Calu3 (cell line): ENCODE measurements at regions of chr1 and their contacts with region 1.

Region 1: GRCh38 chr1:61337981-61338848 is 255.9 kb downstream of the NFIA start:
- DNase-seq: peak; percentile 80
- H3K4me3 Mint-ChIP-seq: peak overlapping the region; percentile 51
- H3K27ac Mint-ChIP-seq: peak overlapping the region; percentile 68
- H3K4me1 Mint-ChIP-seq: peaks cover 35% of the 10 kb centered on the region
- H3K27me3 Mint-ChIP-seq: no peaks in the 10 kb centered on the region
- CTCF ChIP-seq: peak; percentile 80

Region 2: GRCh38 chr1:60978421-60979357 is 359.5 kb before region 1 on chr1:
- CTCF ChIA-PET with region 1: no interaction called
- intact Hi-C with region 1: loop called (anchors 5 kb)
- DNase-seq: peak; percentile 66
- H3K4me3 Mint-ChIP-seq: no peak overlapping the region
- H3K27ac Mint-ChIP-seq: no peak overlapping the region
- H3K4me1 Mint-ChIP-seq: no peaks in the 10 kb centered on the region
- H3K27me3 Mint-ChIP-seq: no peaks in the 10 kb centered on the region
- CTCF ChIP-seq: peak; percentile 57

Region 3: DNA sequence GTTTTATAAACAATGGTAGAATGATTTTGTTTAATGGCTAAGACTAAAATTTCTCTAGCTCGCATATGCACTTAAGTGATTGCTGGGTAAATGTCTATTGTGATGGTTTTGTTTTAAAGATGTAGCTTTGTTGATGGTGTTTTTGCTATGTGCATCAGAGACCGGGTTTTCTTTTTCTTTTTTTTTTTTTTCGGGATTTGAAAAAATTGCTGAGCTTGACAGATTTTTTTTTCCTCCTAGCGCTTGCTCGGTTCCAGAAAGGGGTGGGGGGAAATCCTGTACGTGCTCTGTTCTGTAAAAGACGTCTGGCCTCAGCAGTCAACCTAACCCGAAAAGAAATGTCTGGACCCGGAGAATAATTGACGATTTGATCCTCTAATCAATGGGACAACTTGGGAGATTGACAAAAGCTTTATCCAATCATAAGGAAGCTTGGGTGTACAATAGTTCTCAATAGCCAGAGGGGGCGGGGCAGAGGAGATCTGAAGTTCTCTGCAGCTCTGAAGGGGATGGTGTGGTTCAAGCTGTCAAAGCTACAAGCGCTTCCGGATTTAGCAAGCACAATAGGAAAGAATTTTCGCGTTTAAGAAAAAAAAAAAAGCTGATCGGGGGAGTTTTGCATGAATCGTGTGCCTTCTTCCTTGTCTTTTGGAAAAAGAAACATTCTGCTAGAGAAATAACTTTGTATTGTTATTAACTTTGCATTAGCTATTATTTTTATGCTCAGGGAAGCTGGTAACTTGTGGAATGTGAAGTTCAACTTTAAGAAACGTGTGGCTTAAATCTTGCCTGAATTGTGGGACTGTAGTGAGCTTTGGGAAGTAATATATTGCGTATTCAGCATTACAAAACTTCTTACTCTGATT is 260.3 kb before region 1 on chr1:
- CTCF ChIA-PET with region 1: interaction called, 4 read pairs
- intact Hi-C with region 1: loop called (anchors 5 kb)
- DNase-seq: peak; percentile 95
- H3K4me3 Mint-ChIP-seq: peak overlapping the region; percentile 96
- H3K27ac Mint-ChIP-seq: peak overlapping the region; percentile 93
- H3K4me1 Mint-ChIP-seq: peaks cover 53% of the 10 kb centered on the region
- H3K27me3 Mint-ChIP-seq: no peaks in the 10 kb centered on the region
- CTCF ChIP-seq: no peak

Region 4: GRCh38 chr1:61226784-61227567 is 111.2 kb before region 1 on chr1:
- CTCF ChIA-PET with region 1: no interaction called
- intact Hi-C with region 1: loop called (anchors 10 kb)
- DNase-seq: no peak
- H3K4me3 Mint-ChIP-seq: no peak overlapping the region
- H3K27ac Mint-ChIP-seq: no peak overlapping the region
- H3K4me1 Mint-ChIP-seq: peaks cover 26% of the 10 kb centered on the region
- H3K27me3 Mint-ChIP-seq: no peaks in the 10 kb centered on the region
- CTCF ChIP-seq: no peak

Region 5: DNA sequence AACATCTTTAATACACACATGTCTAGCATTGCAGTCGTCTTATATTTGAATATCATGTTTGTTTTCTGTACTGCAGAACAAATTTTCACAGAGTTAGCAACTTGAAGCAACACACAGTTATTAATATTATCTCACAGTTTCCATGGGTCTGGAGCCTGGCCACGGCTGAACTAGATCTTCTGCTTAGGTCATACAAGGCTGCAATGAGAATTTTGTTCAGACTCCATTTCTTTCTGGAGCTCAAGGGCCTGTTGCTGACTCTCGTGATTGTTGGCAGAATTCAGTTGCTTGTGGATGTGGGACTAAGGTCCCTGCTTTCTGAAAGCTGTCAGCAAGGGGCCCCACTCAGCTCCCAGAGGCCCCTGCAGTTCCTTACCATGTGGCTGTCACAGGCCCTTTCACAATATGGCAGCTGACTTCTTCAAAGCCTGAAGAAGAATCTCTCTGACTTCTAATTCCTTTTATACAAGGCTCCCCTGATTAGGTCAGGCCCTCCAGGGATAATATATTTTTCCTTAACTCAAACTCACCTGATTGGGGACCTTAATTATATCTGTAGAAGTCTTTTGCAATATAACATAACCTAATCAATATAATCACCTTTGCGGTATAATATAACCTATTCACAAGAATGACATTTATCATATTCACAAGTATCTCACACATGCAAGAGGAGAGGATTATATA is 40.4 kb after region 1 on chr1:
- CTCF ChIA-PET with region 1: no interaction called
- intact Hi-C with region 1: no loop called
- DNase-seq: no peak
- H3K4me3 Mint-ChIP-seq: no peak overlapping the region
- H3K27ac Mint-ChIP-seq: no peak overlapping the region
- H3K4me1 Mint-ChIP-seq: no peaks in the 10 kb centered on the region
- H3K27me3 Mint-ChIP-seq: no peaks in the 10 kb centered on the region
- CTCF ChIP-seq: no peak

Region 6: DNA sequence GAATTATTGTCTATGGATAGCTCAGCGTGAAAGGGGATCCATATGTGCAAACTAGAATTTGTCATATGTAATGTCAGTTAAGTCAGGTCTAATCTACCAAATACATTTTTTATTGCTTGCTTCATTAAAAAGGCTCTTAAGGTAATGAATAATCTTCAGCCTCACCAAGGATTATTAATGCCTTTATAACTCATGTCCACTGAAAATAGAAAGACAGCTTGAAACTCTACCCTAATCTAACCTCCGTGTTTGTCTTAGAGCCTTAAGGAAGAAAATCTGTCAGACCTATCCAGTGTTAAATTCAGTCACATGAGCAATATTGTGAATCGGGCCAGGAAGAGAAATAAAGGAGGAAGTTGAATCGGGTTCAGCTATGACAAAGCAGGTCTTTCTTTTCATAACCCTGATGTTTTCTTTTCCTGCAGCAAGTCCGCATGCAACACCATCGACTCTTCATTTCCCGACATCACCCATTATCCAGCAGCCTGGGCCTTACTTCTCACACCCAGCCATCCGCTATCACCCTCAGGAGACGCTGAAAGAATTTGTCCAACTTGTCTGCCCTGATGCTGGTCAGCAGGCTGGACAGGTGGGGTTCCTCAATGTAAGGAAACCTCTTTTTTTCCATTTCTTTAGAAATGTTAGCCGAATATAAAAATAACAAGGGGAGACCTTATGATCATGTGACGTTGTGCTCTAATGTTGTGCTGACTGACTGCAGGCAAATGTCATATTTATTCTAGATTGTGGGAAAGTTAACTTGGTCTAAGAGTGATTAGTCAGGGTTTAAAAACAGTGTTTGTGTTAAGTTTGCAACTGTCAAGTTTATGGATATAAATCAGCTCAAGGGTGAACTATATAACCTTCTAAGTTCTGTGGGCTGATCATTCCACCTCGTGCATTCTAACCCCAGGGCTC is 65.7 kb after region 1 on chr1:
- CTCF ChIA-PET with region 1: no interaction called
- intact Hi-C with region 1: loop called (anchors 2 kb)
- DNase-seq: peak; percentile 19
- H3K4me3 Mint-ChIP-seq: peak overlapping the region; percentile 40
- H3K27ac Mint-ChIP-seq: peak overlapping the region; percentile 82
- H3K4me1 Mint-ChIP-seq: peaks cover 48% of the 10 kb centered on the region
- H3K27me3 Mint-ChIP-seq: no peaks in the 10 kb centered on the region
- CTCF ChIP-seq: no peak